ENCODE measurements at regions of chr15 and their contacts with region 1.

Region 1: GRCh38 chr15:57476533-57476975 is 100.2 kb downstream of the CGNL1 start:
- DNase-seq: peak; percentile 21
- ATAC-seq: no peak
- H3K4me3 ChIP-seq: no peak overlapping the region
- H3K27ac ChIP-seq: peak overlapping the region; percentile 99
- H3K4me1 ChIP-seq: peaks cover 68% of the 10 kb centered on the region
- H3K27me3 ChIP-seq: no peaks in the 10 kb centered on the region
- CTCF ChIP-seq: no peak
- EP300 ChIP-seq: peak in 1 of 2 experiments; percentile 25; a peak in 1 of 4 replicates
- POLR2A ChIP-seq: no peak
- RAD21 ChIP-seq: no peak

Region 2: GRCh38 chr15:57427367-57427821 is 49.2 kb before region 1 on chr15:
- CTCF ChIA-PET with region 1: no interaction called
- POLR2A ChIA-PET with region 1: no interaction called
- in situ Hi-C with region 1: no loop called
- intact Hi-C with region 1: no loop called
- DNase-seq: peak; percentile 31
- ATAC-seq: peak; percentile 87
- H3K4me3 ChIP-seq: peak overlapping the region in 2 of 3 experiments; percentile 30; a peak in 4 of 6 replicates
- H3K27ac ChIP-seq: peak overlapping the region; percentile 17
- H3K4me1 ChIP-seq: peaks cover 36% of the 10 kb centered on the region
- H3K27me3 ChIP-seq: no peaks in the 10 kb centered on the region
- CTCF ChIP-seq: no peak
- EP300 ChIP-seq: no peak
- POLR2A ChIP-seq: no peak
- RAD21 ChIP-seq: no peak

Region 3: DNA sequence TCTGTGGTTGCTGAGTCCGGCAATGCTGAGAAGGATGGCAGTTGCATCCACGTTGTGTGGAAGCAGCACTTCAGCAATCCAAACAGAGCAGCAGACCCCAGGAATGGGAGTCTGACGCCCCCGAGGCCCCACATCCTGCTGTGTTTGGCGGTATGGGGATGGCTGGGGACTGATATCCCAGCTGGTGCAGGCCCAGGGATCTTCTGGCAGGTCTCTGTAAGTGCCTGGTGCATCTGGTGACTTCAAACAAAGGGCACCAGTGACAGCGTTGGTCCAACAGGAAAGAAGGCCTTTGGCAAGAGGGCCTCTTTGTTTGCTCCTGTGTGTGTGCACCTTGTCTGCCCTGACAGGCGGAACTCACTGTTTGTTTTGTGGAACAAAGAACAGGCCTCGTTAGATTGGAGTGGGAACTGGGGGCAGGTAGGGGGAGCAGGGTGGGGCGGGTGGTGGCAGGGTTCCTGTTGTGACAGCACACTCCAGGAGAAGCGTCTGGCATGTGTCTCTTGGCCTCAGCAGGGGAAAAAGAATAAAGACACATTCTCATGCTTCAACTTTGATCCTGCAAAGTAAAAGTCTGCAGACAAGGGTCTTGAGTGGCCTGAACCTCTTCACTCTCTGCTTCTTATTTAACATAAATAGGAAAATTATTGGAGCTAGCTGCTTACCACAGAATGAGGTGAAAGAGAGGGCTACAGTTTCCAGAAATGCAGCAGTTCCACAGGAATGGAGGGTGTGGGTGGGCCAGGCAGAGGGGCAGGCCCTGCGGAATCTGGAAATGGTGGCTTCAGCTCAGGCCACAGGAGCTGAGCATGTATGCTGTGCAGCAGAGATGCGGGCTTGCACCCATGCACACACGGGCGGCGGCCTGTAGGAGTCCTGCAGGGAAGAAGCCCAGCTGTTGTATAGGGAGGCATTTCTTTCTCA is 20.7 kb after region 1 on chr15:
- CTCF ChIA-PET with region 1: no interaction called
- POLR2A ChIA-PET with region 1: interaction called, 26 read pairs
- in situ Hi-C with region 1: no loop called
- intact Hi-C with region 1: loop called (anchors 1 kb)
- DNase-seq: peak; percentile 100
- ATAC-seq: peak; percentile 97
- H3K4me3 ChIP-seq: peak overlapping the region in 1 of 3 experiments; percentile 55; a peak in 2 of 6 replicates
- H3K27ac ChIP-seq: peak overlapping the region; percentile 94
- H3K4me1 ChIP-seq: peaks cover 77% of the 10 kb centered on the region
- H3K27me3 ChIP-seq: no peaks in the 10 kb centered on the region
- CTCF ChIP-seq: no peak
- EP300 ChIP-seq: peak; percentile 78 to 97; a peak in 3 of 4 replicates
- POLR2A ChIP-seq: peak; percentile 78 to 89
- RAD21 ChIP-seq: no peak

Region 4: DNA sequence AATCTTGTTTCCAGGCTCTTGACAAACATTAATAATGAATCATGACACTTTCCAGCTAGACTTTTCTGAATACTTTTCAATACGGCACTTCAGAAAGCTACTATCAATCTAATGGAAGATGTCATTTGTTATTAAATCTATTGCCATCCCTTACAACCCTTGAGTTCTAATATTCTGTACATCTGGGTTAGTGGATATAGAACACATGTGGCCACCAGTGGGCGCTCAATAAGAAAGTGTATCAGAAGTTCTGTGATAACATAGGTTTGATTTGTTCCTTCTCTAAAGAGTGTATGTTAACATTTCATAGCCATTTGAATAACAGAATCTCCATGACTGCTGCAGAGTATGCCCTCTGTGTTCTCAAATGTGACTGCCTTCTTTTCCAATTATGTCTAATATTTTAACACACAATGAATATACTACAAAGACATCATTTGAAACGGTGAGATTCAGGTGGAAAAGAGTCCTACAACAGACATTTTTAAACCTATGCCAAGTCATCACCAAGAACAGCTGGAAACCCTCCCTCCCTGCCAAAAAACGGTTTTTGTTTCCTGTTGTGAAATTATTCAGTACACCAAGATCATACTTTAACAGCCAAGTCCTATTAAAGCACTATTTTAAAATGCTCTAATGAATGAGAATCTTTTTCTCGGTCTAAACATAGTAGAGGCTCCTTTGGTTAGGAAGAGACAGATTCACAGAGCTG is 566.8 kb after region 1 on chr15:
- CTCF ChIA-PET with region 1: no interaction called
- POLR2A ChIA-PET with region 1: no interaction called
- in situ Hi-C with region 1: no loop called
- intact Hi-C with region 1: no loop called
- DNase-seq: peak; percentile 27
- ATAC-seq: peak; percentile 56; the same call in 2 of the 3 replicates
- H3K4me3 ChIP-seq: no peak overlapping the region
- H3K27ac ChIP-seq: no peak overlapping the region
- H3K4me1 ChIP-seq: no peaks in the 10 kb centered on the region
- H3K27me3 ChIP-seq: no peaks in the 10 kb centered on the region
- CTCF ChIP-seq: peak; percentile 59
- EP300 ChIP-seq: no peak
- POLR2A ChIP-seq: no peak
- RAD21 ChIP-seq: no peak

Measured in HepG2 (cell line).